Activated T-helper 1 cell treated with anti-CD3 and anti-CD28 coated beads, Interleukin-12 subunit alpha, Interleukin-12 subunit beta, Interleukin-2, Interleukin-4 antibody, amounts not matched to agents 30 ng/mL and 10 ng/mL and 1 ng/mL, durations not matched to agents 14 hours and 24 hours and 36 hours (primary cell): ENCODE measurements at regions of chr2 and their contacts with region 1.

Region 1: DNA sequence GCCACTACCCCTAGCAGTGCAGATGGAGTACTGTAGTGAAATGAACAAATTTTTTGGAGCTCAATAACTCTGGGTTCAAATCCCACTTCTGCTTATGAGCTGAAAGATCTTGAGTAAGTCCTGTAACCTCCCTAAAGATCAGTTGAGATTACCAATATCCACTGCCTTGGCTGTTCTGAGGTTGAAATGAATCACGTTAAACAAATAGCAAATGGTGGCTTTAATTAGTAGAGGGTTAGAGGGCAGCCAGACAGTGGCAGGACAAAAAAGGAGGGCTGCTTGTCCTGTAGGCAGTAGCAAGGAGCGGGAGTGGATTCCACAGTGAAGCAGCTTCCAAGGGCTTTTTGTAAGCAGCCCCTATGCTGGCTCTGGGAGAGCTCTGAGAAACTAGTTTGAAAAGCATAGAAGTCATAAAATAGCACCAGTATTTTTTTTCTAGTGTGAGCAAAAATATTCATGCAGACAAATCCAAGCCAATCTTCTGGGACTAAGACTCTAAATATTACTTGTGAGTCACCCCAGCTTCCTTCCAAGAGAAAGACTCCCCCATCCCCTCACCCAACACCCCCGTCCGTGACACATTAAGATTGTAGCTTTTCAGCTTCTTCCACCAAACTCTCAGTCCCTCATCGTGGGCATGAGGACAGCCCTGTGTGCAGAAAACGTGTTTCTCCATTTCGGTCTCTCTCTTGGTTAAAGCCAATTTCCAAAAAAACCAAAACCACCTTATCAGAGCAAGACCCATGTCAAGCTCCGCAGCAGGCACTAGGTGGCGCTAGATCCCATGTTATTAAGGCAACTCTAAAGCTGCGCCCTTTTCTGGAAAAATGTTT is 123.5 kb upstream of the LGALSL start:
- DNase-seq: peak; percentile 60
- H3K4me3 Mint-ChIP-seq: peak overlapping the region; percentile 73
- H3K27ac Mint-ChIP-seq: peak overlapping the region; percentile 66
- H3K4me1 Mint-ChIP-seq: peaks cover 60% of the 10 kb centered on the region
- H3K27me3 Mint-ChIP-seq: peaks cover 10% of the 10 kb centered on the region

Region 2: GRCh38 chr2:64052468-64053241 is 277.8 kb before region 1 on chr2:
- intact Hi-C with region 1: loop called (anchors 1 kb)
- DNase-seq: no peak
- H3K4me3 Mint-ChIP-seq: no peak overlapping the region
- H3K27ac Mint-ChIP-seq: no peak overlapping the region
- H3K4me1 Mint-ChIP-seq: peaks cover 40% of the 10 kb centered on the region
- H3K27me3 Mint-ChIP-seq: no peaks in the 10 kb centered on the region

Region 3: DNA sequence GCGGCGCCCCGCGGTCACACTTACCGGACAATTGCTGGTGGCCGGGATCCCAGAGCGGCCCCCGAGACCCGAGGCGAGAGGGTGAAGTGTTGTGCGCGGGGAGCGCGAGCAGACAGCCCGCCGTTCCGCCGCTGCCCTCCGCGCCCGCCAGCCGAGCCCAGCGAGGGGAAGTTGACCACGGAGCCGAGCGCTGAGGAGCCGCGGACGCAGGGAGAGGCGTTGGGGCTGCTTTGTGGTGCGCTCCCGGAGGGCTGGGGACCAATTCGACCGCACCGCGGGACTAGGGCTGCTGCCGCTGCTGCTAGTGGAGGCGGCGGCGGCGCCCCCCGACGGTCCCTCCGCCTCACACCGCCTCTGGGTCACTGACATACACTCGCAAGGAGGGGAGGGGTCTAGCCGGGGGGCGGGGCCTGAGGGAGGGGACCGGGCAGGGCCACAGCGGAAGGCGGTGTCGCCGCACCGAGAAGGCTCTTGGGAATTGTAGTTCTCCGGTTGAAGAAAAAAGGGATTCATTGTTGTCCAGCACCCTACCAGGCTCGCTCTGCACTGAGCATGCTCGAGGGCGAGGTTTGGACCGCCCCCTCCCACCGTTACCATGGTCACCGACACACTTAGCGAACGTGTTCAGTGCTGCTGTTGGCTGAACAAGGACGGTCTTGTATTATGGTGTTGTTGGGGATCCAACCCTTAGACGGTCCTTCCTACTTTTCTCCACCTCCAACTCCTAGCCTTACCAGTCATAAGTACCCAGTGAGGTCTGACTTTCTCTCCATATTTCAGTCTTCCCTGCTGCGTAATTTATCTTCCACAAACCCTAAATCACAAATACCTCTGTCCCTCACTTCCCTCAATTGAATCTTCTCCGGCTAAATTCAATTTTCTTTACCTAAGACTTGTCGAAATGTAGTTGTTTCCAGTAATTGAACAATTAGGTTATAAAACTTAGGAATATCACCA is 186.2 kb before region 1 on chr2 and contains the start of gene PELI1:
- intact Hi-C with region 1: loop called (anchors 1 kb)
- DNase-seq: peak; percentile 90
- H3K4me3 Mint-ChIP-seq: peak within 1 kb of the TSS; percentile 98
- H3K27ac Mint-ChIP-seq: peak within 1 kb of the TSS; percentile 97
- H3K4me1 Mint-ChIP-seq: peaks cover 28% of the 10 kb centered on the region
- H3K27me3 Mint-ChIP-seq: peaks cover 3% of the 10 kb centered on the region
- total RNA-seq, gene PELI1: 47.1 and 50.4 TPM in 2 replicates

Region 4: GRCh38 chr2:64228126-64228678 is 102.3 kb before region 1 on chr2:
- intact Hi-C with region 1: loop called (anchors 1 kb)
- DNase-seq: peak; percentile 54
- H3K4me3 Mint-ChIP-seq: peak overlapping the region; percentile 80
- H3K27ac Mint-ChIP-seq: peak overlapping the region; percentile 86
- H3K4me1 Mint-ChIP-seq: peaks cover 44% of the 10 kb centered on the region
- H3K27me3 Mint-ChIP-seq: peaks cover 7% of the 10 kb centered on the region

Region 5: GRCh38 chr2:64609227-64609941 is 278.9 kb after region 1 on chr2:
- intact Hi-C with region 1: loop called (anchors 1 kb)
- DNase-seq: peak; percentile 67
- H3K4me3 Mint-ChIP-seq: peak overlapping the region; percentile 68
- H3K27ac Mint-ChIP-seq: peak overlapping the region; percentile 29
- H3K4me1 Mint-ChIP-seq: peaks cover 28% of the 10 kb centered on the region
- H3K27me3 Mint-ChIP-seq: peaks cover 11% of the 10 kb centered on the region

Region 6: GRCh38 chr2:64865073-64865830 is 534.8 kb after region 1 on chr2:
- intact Hi-C with region 1: loop called (anchors 1 kb)
- DNase-seq: peak; percentile 61
- H3K4me3 Mint-ChIP-seq: peak overlapping the region; percentile 78
- H3K27ac Mint-ChIP-seq: peak overlapping the region; percentile 60
- H3K4me1 Mint-ChIP-seq: peaks cover 6% of the 10 kb centered on the region
- H3K27me3 Mint-ChIP-seq: peaks cover 13% of the 10 kb centered on the region